Right lobe of liver (tissue), 6 donors: ENCODE measurements at regions of chr11 and their contacts with region 1.

Region 1: DNA sequence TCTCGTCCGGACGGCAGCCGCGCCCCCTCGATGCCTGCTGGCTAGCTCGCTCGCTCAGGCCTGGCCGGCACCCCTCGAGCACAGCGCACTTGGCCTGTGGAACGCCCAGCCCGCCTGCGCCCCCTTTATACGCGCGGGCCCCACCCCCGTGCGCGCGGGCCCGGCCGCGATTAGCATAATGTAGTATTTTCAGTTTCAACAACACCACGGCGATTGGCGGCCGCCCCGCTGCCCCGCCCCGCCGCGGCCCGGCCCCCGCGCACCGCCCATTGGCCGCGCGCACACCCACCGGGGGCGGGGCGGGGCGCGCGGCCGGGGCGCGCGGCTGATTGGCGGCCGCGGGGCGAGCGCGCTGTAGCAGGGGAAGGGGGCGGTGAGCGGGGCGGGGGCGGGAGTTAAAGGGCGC is at the start of gene CDKN1C:
- DNase-seq: peak; percentile 85 to 90 (median 90)
- ATAC-seq: peak; percentile 75 to 86 (median 80)
- H3K4me3 ChIP-seq: peak within 1 kb of the TSS; percentile 51 to 59 (median 57)
- H3K27ac ChIP-seq: peak within 1 kb of the TSS; percentile 31 to 48 (median 41)
- H3K4me1 ChIP-seq: peaks cover 0 to 3% (median 0%) of the 10 kb centered on the region in 4 donors
- H3K27me3 ChIP-seq: no peaks in the 10 kb centered on the region
- CTCF ChIP-seq: no peak
- POLR2A ChIP-seq: peak; percentile 78
- total RNA-seq, gene CDKN1C: 2.2 to 8.0 (median 3.6) TPM

Region 2: DNA sequence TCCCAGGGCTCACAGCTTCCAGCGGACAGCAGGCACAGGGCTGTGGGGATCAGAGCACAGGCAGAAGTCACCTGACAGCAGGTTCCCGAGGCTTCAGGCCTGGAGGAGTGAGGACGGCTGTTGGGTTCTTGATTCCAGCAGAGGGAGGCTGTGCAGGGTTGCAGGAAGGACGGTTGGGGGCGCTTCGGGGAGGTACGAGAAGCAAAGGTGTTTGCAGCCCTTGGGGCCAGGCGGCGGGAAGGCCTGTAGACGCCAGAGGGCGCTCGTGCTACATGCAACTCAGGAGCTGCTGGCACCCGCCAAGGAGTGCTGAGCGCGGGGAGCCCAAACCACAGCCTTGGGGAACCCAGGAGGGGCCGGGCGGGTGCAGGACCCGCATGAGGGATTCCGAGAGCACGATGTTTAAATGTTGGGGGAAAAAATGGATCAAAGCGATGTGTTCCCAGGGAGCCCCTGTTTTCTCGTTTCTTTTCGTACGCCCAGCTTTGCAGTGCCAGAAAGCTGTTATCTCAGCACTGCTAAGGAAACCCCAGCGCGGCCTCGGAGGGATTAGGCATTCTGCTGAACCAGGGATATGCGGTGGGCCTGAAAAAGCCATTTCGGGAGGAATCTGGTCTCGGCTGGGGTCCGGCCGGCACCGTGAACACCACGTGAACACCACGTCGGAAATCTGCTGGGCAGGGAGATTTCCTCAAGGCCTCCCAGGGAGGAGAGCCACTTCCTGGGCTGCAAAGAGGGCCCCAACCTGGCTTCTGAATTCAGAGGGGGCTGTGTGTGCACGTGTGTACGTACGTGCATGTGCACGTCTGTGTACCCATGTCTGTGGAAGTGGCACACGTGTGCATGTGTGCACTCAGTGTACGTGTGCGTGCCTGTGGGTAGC is 352.7 kb before region 1 on chr11:
- intact Hi-C with region 1: loop called (anchors 2 to 5 kb)
- DNase-seq: peak; percentile 90 to 93 (median 90)
- ATAC-seq: peak; percentile 86 to 93 (median 92)
- H3K4me3 ChIP-seq: no peak overlapping the region
- H3K27ac ChIP-seq: no peak overlapping the region
- H3K4me1 ChIP-seq: peaks cover 0 to 5% (median 0%) of the 10 kb centered on the region in 4 donors
- H3K27me3 ChIP-seq: no peaks in the 10 kb centered on the region
- CTCF ChIP-seq: peak; percentile 99 to 100 (median 99)
- POLR2A ChIP-seq: no peak